Dendritic cell treated with granulocyte-macrophage colony-stimulating factor and Interleukin-4, amounts not matched to agents 40 ng/mL and 50 ng/mL, for 4 days (primary cell): ENCODE measurements at regions of chr16 and their contacts with region 1.

Region 1: DNA sequence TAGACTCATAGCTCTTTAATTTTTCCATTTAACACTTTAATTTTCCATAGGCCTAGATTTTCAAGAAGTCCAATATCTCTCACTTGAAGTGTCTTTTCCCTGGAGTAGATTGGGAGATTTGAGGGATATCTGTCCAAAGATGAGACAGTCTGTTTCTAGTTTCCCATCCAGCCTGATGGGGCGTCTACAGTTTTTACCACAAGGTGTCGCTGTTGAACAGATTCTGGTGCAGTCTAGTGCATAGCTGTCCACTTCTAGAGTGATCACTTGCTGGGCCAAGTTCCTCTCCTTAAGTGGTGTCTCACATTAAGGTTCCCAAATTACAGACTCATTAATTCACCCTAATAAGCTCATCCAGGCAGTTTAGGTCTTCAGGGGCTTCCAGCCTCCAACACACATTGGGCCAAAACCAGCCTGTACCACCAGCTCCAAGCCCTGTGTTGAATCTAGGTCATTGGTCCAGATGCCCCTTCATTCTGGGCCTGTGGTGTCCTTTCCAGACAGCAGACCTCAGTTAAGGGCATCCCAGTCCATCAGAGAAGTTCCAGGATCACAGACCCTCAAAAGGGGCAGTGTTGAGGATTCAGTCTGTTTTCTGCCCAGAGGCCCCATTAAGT is 9.4 kb downstream of the SNX20 start:
- H3K4me3 Mint-ChIP-seq: no peak overlapping the region
- H3K27ac Mint-ChIP-seq: no peak overlapping the region
- H3K4me1 Mint-ChIP-seq: peaks cover 36% of the 10 kb centered on the region
- H3K27me3 Mint-ChIP-seq: no peaks in the 10 kb centered on the region

Region 2: DNA sequence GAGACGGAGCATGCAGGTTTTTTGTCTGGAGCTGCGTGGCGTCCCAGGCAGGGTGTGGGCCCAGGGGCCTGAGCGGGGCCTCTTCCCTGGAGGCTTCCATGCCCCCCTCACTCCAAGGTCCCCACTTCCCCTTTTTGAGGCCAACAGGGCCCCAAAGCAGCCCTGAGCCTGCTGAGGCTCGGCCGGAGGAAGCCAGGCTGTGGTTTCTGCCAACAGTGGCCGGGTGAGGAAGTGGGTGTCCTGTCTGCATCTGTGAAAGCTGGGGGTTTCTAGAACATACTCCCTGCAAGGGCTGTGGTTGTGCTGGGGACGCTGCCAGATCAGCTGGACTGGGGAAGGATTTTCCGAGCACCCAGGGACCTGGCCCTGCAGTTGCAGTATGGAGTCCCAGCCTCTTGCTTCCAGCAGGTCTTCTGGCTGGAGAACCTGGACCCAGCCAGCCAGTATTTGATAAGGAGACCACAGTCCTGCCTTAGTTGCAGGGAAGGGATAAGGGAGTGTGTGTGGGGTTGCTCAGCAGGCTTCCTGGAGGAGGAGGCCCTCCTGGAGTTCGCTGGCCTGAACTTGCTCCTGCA is 389.7 kb before region 1 on chr16:
- intact Hi-C with region 1: no loop called
- H3K4me3 Mint-ChIP-seq: peak overlapping the region; percentile 87
- H3K27ac Mint-ChIP-seq: peak overlapping the region; percentile 90
- H3K4me1 Mint-ChIP-seq: peaks cover 86% of the 10 kb centered on the region
- H3K27me3 Mint-ChIP-seq: no peaks in the 10 kb centered on the region

Region 3: GRCh38 chr16:50644729-50645128 is 27.0 kb before region 1 on chr16:
- intact Hi-C with region 1: no loop called
- H3K4me3 Mint-ChIP-seq: no peak overlapping the region
- H3K27ac Mint-ChIP-seq: no peak overlapping the region
- H3K4me1 Mint-ChIP-seq: no peaks in the 10 kb centered on the region
- H3K27me3 Mint-ChIP-seq: peaks cover 5% of the 10 kb centered on the region

Region 4: DNA sequence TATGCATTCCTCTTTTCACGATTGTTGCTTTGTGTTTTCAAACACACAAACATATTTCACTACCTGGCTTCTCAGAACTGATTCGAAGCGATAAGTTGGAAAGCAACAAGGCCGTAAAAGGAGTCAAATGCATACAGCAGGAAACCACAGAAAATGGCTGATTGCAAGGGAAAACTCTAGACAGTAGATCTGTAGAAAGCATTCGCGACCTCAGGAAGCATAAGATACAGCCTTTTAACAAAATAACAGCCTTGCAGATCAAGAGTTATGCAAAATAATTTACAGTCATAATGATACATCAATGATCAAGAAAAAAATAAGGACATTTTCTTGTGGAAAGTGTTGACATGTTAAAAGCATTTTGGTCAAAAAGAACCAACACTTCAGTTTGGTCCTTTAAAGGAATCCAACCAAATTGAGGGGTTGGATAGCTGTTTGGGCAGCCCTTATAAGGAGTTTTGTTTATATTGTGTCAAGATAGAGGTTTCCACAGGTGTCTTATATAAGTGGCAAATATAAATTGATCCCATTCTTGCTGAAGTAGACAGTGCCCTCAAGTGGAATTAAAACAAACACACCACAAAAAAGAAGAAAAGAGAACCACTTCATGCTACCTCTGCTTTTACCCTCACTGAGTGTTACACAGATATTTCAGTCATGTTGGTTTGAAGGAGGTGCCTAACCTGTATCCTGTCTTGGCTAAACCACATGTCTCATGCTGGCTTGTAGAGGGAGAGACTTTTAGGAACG is 75.6 kb after region 1 on chr16:
- intact Hi-C with region 1: loop called (anchors 2 kb)
- H3K4me3 Mint-ChIP-seq: no peak overlapping the region
- H3K27ac Mint-ChIP-seq: no peak overlapping the region
- H3K4me1 Mint-ChIP-seq: peaks cover 38% of the 10 kb centered on the region
- H3K27me3 Mint-ChIP-seq: no peaks in the 10 kb centered on the region

Region 5: GRCh38 chr16:50806099-50807062 is 134.6 kb after region 1 on chr16:
- intact Hi-C with region 1: loop called (anchors 2 kb)
- H3K4me3 Mint-ChIP-seq: peak overlapping the region; percentile 51
- H3K27ac Mint-ChIP-seq: no peak overlapping the region
- H3K4me1 Mint-ChIP-seq: peaks cover 8% of the 10 kb centered on the region
- H3K27me3 Mint-ChIP-seq: no peaks in the 10 kb centered on the region